ENCODE measurements at regions of chr3 and their contacts with region 1.

Region 1: DNA sequence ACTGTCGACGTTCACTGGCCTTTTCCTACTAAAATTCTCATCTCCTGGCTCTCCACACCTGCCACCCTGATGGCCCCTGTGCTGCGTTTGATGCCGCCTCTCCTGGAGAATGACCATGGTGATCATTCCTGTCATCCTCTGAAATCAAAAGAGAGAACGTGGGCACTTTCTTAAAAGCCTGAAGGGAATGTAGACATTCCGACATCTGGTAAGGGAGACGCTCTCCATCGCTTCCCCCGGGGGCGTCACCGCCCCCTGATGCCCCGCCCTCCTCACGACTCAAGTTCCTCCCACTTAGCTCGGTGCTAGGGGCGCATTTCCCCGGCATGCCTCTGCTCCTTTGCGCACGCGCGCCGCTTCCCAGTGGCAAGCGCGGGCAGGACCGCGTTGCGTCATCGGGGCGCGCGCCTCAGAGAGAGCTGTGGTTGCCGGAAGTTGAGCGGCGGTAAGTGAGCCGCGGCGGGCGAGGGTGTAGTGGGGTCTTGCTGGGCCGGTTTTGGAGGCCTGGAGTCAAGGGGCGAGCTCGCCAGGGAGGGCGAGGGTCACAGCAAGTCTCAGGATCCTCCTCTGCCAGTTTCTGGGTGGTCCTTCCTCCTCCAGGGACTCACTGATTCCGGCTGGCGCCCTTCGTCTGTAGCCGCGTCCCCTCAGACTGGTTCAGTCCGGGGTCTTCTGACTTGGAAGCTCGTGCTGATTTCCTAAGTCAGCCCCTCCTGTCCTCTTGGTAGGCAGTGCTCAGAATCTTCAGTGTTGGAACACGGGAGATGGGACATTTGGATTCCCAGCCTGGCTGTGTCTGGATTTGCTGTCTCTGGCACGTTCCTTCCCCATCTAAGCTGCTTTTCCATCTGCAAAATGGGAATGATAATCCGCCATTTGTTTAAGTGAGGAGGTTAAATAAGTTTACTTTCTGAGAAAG is at the start of gene ATG7:
- DNase-seq: peak; percentile 93
- H3K4me3 ChIP-seq: peak within 1 kb of the TSS; percentile 97
- H3K27ac ChIP-seq: peak within 1 kb of the TSS; percentile 70
- H3K27me3 ChIP-seq: no peaks in the 10 kb centered on the region
- CTCF ChIP-seq: 0 out of 2 replicates have a peak, but pooled peaks have one; percentile 6
- polyA plus RNA-seq, gene ATG7: 35.4 and 51.7 TPM in 2 replicates

Region 2: GRCh38 chr3:11282250-11283138 is 10.2 kb after region 1 on chr3:
- CTCF ChIA-PET with region 1: interaction called, 3 read pairs
- POLR2A ChIA-PET with region 1: interaction called, 20 read pairs
- DNase-seq: no peak
- H3K4me3 ChIP-seq: no peak overlapping the region
- H3K27ac ChIP-seq: peak overlapping the region; percentile 74
- H3K27me3 ChIP-seq: no peaks in the 10 kb centered on the region
- CTCF ChIP-seq: no peak

Region 3: DNA sequence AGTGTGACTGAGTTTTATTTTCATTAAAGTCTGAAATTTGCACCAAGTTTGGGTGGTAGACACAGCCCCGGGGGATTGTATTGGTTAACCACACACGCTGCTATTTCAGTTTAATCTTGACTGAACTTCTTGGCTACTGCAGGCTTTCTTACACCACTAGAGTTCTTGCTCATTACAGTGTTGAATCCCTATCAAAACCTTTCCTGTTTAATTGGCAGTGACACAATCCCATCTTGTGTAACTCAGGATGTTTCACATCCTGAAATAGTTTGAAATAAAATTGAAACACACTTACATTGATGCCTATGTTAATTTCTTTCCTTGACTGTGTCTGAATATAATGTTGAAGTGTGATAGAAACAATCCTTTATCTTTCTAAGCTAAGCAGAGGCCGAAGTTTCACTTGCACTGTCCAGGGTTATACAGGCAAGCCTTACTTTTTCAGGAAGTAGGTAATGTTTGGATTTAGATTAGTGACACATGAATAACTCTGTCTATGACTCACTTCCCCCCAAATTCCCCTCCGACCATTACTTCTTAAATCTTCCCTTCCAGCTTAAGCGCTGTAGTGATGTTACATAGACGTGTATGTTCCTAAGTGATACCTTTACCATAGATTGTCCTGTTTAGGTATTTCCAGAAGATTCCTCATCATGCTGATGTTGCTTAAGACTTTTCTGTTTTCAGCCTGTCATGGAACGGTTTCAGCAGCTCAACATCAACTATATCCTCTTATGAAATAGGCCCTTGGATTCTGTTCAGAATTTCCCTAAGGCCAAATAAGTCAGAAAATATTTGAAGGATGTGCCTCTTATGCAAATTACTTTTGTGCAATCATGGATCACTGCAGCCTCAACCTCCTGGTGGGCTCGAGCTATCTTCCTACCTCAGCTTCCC is 16.8 kb after region 1 on chr3:
- CTCF ChIA-PET with region 1: interaction called, 3 read pairs
- POLR2A ChIA-PET with region 1: interaction called, 16 read pairs
- DNase-seq: peak; percentile 74
- H3K4me3 ChIP-seq: peak overlapping the region; percentile 10; the same call in 1 of the 2 replicates
- H3K27ac ChIP-seq: peak overlapping the region; percentile 77
- H3K27me3 ChIP-seq: no peaks in the 10 kb centered on the region
- CTCF ChIP-seq: no peak

Measured in AG04450 (cell line).